ENCODE measurements at regions of chr12 and their contacts with region 1.

Region 1: GRCh38 chr12:52608831-52609630 is 7.8 kb upstream of the KRT72 start:
- DNase-seq: peak; percentile 25
- H3K4me3 Mint-ChIP-seq: no peak overlapping the region
- H3K27ac Mint-ChIP-seq: no peak overlapping the region
- H3K4me1 Mint-ChIP-seq: peaks cover 93% of the 10 kb centered on the region
- H3K27me3 Mint-ChIP-seq: no peaks in the 10 kb centered on the region

Region 2: DNA sequence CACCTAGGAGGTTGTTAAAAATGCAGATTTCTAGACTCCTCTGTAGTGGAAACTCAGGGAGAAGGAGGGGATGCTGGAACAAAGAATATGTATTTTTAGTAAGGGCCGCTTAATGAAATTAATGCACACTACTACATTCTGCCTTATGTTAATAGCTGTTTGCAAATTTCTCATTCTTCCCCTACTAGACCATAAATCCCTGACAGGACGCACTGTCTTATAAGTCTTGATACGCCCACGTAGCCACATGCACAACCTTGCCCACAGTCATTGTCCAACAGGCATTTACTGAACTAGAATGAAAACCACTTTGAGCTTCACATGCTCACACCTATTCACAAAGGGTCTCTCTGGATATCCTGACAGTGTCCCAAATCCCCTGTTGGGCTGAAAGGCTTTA is 32.4 kb after region 1 on chr12:
- CTCF ChIA-PET with region 1: no interaction called
- intact Hi-C with region 1: no loop called
- DNase-seq: no peak
- H3K4me3 Mint-ChIP-seq: no peak overlapping the region
- H3K27ac Mint-ChIP-seq: no peak overlapping the region
- H3K4me1 Mint-ChIP-seq: peaks cover 58% of the 10 kb centered on the region
- H3K27me3 Mint-ChIP-seq: no peaks in the 10 kb centered on the region

Region 3: GRCh38 chr12:52691076-52691840 is 82.2 kb after region 1 on chr12:
- CTCF ChIA-PET with region 1: interaction called, 4 read pairs
- intact Hi-C with region 1: loop called (anchors 2 kb)
- DNase-seq: peak; percentile 73
- H3K4me3 Mint-ChIP-seq: peak overlapping the region; percentile 70
- H3K27ac Mint-ChIP-seq: no peak overlapping the region
- H3K4me1 Mint-ChIP-seq: peaks cover 25% of the 10 kb centered on the region
- H3K27me3 Mint-ChIP-seq: no peaks in the 10 kb centered on the region

Measured in activated naive CD4-positive, alpha-beta T cell treated with anti-CD3 and anti-CD28 coated beads for 36 hours (primary cell).